ENCODE measurements at regions of chrX and their contacts with region 1.

Region 1: DNA sequence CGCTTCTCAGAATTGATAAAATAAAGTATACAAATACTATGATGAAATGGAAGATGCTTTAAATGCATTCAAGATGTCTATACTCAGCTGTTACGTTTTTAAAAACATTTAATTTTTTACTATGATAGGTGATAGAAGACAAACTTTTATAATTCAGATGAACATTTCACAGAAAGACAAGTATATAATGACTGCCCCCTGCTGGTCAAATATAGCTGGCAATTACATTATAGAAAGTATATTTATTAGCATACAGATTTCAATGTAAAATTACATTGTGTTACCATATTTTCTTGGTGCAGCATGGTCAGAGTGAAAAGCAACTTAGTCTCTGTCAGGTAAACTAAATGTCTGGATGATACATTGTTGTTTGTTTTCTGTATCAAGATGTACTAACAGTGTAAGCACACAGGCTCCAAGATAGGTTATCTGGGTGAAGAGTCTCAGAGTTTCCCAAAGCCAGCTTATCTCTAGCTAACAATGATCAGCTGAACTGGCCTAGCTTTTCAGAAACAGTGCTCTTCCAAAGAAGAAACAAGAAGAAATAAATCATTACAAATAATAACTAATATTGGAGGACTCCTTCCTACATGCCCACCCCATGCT is 54.1 kb downstream of the SRPX start:
- DNase-seq: peak; percentile 65
- ATAC-seq: no peak
- H3K4me3 ChIP-seq: no peak overlapping the region
- H3K27ac ChIP-seq: no peak overlapping the region
- H3K4me1 ChIP-seq: no peaks in the 10 kb centered on the region
- H3K27me3 ChIP-seq: no peaks in the 10 kb centered on the region
- CTCF ChIP-seq: peak; percentile 78

Region 2: GRCh38 chrX:37803057-37803456 is 363.5 kb before region 1 on chrX:
- CTCF ChIA-PET with region 1: no interaction called
- POLR2A ChIA-PET with region 1: interaction called, 10 read pairs
- intact Hi-C with region 1: no loop called
- DNase-seq: no peak
- ATAC-seq: no peak
- H3K4me3 ChIP-seq: no peak overlapping the region
- H3K27ac ChIP-seq: no peak overlapping the region
- H3K4me1 ChIP-seq: no peaks in the 10 kb centered on the region
- H3K27me3 ChIP-seq: no peaks in the 10 kb centered on the region
- CTCF ChIP-seq: no peak

Region 3: DNA sequence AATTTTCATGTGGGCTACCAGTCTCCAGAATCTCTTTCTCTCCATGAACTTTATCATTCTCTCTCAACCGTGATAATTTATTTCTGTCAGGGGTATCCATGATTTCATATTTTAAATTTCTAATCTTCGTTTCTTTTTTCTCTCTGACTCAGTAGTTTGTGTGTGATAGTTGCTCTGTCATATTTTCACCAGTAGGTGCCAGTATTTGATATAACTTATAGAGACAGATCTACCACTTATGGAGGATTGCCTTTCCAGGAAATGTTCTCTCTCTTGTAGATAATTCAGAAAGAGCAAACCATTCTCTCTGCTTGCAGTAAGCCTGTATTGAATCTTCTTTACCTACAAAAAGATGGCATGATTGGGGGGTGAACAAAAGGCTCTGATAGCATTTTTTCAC is 239.9 kb before region 1 on chrX:
- CTCF ChIA-PET with region 1: interaction called, 4 read pairs
- POLR2A ChIA-PET with region 1: interaction called, 3 read pairs
- intact Hi-C with region 1: loop called (anchors 1 kb)
- DNase-seq: peak; percentile 69
- ATAC-seq: peak; percentile 39; the same call in 1 of the 2 replicates
- H3K4me3 ChIP-seq: no peak overlapping the region
- H3K27ac ChIP-seq: no peak overlapping the region
- H3K4me1 ChIP-seq: peaks cover 14% of the 10 kb centered on the region
- H3K27me3 ChIP-seq: no peaks in the 10 kb centered on the region
- CTCF ChIP-seq: peak; percentile 80

Region 4: DNA sequence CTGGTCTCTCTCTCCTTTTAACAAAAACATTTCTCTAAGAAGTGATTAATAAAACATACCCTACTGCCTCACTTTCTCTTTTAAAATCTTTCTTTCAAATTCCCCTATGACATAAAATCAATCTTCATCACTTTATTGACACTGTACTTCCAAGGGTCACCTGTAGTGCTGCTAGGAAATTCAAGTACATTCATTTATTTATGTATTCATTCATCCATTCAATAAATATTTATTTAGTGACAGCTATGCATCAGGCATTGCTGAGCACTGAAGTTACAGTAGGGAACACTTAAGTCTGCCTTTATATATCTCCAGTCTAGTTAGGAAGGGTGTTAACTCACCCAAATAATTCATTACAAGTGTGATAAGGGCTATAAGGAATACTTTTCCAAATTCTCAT is 158.0 kb before region 1 on chrX:
- CTCF ChIA-PET with region 1: no interaction called
- POLR2A ChIA-PET with region 1: no interaction called
- intact Hi-C with region 1: loop called (anchors 2 kb)
- DNase-seq: peak; percentile 66
- ATAC-seq: peak; percentile 69
- H3K4me3 ChIP-seq: no peak overlapping the region
- H3K27ac ChIP-seq: peak overlapping the region; percentile 32
- H3K4me1 ChIP-seq: peaks cover 48% of the 10 kb centered on the region
- H3K27me3 ChIP-seq: no peaks in the 10 kb centered on the region
- CTCF ChIP-seq: peak; percentile 39; the same call in 1 of the 2 replicates

Region 5: GRCh38 chrX:38151441-38151840 is 15.1 kb before region 1 on chrX:
- CTCF ChIA-PET with region 1: no interaction called
- POLR2A ChIA-PET with region 1: no interaction called
- intact Hi-C with region 1: no loop called
- DNase-seq: no peak
- ATAC-seq: no peak
- H3K4me3 ChIP-seq: no peak overlapping the region
- H3K27ac ChIP-seq: no peak overlapping the region
- H3K4me1 ChIP-seq: no peaks in the 10 kb centered on the region
- H3K27me3 ChIP-seq: no peaks in the 10 kb centered on the region
- CTCF ChIP-seq: no peak

Measured in PC-3 (cell line).